ENCODE measurements at regions of chr3 and their contacts with region 1.

Region 1: GRCh38 chr3:72756900-72757299 is 91.3 kb downstream of the SHQ1 start:
- DNase-seq: peak; percentile 67 to 77 (median 71)
- H3K4me3 ChIP-seq: peak overlapping the region in 1 of 2 donors; percentile 25
- H3K4me3 Mint-ChIP-seq: peak overlapping the region; percentile 50 to 84 (median 68)
- H3K27ac ChIP-seq: peak overlapping the region; percentile 49
- H3K27ac Mint-ChIP-seq: peak overlapping the region; percentile 74 to 97 (median 92)
- H3K4me1 ChIP-seq: peaks cover 34% of the 10 kb centered on the region
- H3K4me1 Mint-ChIP-seq: peaks cover 24 to 40% (median 33%) of the 10 kb centered on the region in 4 donors
- H3K27me3 ChIP-seq: no peaks in the 10 kb centered on the region
- H3K27me3 Mint-ChIP-seq: no peaks in the 10 kb centered on the region

Region 2: GRCh38 chr3:72738752-72739530 is 18.0 kb before region 1 on chr3:
- CTCF ChIA-PET with region 1: interaction called, 11 read pairs
- POLR2A ChIA-PET with region 1: interaction called, 31 read pairs
- intact Hi-C with region 1: loop called (anchors 1 kb)
- DNase-seq: peak; percentile 68 to 78 (median 75)
- H3K4me3 ChIP-seq: peak overlapping the region; percentile 63 to 78
- H3K4me3 Mint-ChIP-seq: peak overlapping the region; percentile 87 to 94 (median 90)
- H3K27ac ChIP-seq: peak overlapping the region; percentile 27
- H3K27ac Mint-ChIP-seq: peak overlapping the region; percentile 30 to 93 (median 87)
- H3K4me1 ChIP-seq: peaks cover 19% of the 10 kb centered on the region
- H3K4me1 Mint-ChIP-seq: peaks cover 9 to 29% (median 17%) of the 10 kb centered on the region in 4 donors
- H3K27me3 ChIP-seq: no peaks in the 10 kb centered on the region
- H3K27me3 Mint-ChIP-seq: no peaks in the 10 kb centered on the region

Region 3: GRCh38 chr3:72791161-72791560 is 34.3 kb after region 1 on chr3:
- CTCF ChIA-PET with region 1: no interaction called
- POLR2A ChIA-PET with region 1: no interaction called
- intact Hi-C with region 1: loop called (anchors 5 kb)
- DNase-seq: peak in 2 of 5 donors; percentile 0 to 4
- H3K4me3 ChIP-seq: no peak overlapping the region
- H3K4me3 Mint-ChIP-seq: peak overlapping the region; percentile 45 to 79 (median 66)
- H3K27ac ChIP-seq: no peak overlapping the region
- H3K27ac Mint-ChIP-seq: peak overlapping the region in 3 of 7 donors; percentile 54 to 89 (median 85)
- H3K4me1 ChIP-seq: peaks cover 10% of the 10 kb centered on the region
- H3K4me1 Mint-ChIP-seq: peaks cover 12 to 17% (median 12%) of the 10 kb centered on the region in 4 donors
- H3K27me3 ChIP-seq: no peaks in the 10 kb centered on the region
- H3K27me3 Mint-ChIP-seq: no peaks in the 10 kb centered on the region